ENCODE measurements at regions of chr17 and their contacts with region 1.

Region 1: GRCh38 chr17:64938925-64939474 is 19.7 kb upstream of the LRRC37A3 start:
- DNase-seq: peak in 1 of 2 donors; percentile 30
- H3K4me3 ChIP-seq: no peak overlapping the region
- H3K27ac ChIP-seq: no peak overlapping the region
- H3K4me1 ChIP-seq: no peaks in the 10 kb centered on the region
- H3K27me3 ChIP-seq: no peaks in the 10 kb centered on the region
- CTCF ChIP-seq: peak; percentile 33 to 36

Region 2: GRCh38 chr17:64968652-64969501 is 29.9 kb after region 1 on chr17:
- intact Hi-C with region 1: no loop called
- DNase-seq: no peak
- H3K4me3 ChIP-seq: no peak overlapping the region
- H3K27ac ChIP-seq: no peak overlapping the region
- H3K4me1 ChIP-seq: peaks cover 0 to 15% (median 2%) of the 10 kb centered on the region in 4 donors
- H3K27me3 ChIP-seq: no peaks in the 10 kb centered on the region
- CTCF ChIP-seq: no peak

Region 3: DNA sequence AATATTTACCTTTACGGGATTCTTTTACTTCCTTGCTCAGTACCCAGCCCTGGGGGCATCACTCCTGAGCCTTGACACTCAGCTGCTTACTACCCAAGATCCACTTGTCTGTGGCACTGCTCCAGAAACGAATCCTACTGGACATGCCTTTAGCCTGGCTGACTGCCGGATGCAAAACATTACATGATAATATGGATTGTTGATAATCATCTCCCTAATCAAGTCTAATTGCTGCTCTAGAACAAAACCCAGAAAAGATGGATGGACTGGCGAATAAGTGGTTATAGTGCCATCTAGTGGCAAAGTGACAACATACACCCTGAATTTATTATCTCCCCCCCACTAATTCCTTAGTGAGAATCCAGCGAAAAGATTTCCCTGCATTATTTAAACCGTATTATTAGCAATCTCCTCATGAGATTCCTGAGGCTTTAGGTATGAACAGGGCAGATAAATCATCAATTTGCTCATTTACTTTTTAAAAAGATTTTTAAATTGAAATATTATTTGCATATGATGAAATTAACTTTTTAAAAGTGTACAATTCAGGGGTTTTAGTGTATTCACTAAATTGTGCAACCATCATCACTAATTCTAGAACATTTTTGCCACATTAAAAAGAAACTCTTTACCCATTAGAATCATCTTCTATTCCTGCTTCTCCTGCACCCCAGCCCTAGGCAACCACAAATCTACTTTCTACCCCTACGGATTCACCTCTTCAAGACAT is 259.8 kb after region 1 on chr17:
- intact Hi-C with region 1: loop called (anchors 10 kb)
- DNase-seq: no peak
- H3K4me3 ChIP-seq: no peak overlapping the region
- H3K27ac ChIP-seq: no peak overlapping the region
- H3K4me1 ChIP-seq: no peaks in the 10 kb centered on the region
- H3K27me3 ChIP-seq: no peaks in the 10 kb centered on the region
- CTCF ChIP-seq: peak; percentile 67 to 73

Region 4: DNA sequence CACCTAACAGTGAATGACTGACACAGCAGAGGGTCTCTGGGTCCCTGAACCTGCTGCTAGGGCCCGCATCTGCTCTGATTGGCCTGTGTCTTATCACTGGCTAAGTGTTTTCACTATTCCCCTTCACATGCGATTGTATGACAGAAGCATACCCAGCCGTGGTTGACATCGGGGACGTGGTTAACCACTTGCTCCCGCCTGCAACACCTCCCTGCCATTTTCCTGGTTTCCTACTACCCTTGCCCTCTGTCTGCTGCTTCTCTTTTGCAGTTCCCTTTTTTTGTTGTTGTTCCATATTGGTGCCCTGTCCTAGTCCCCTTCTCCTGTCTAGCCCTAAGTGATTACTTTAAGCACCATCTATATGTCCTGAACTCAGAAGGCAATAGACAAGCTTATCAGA is 375.2 kb after region 1 on chr17:
- intact Hi-C with region 1: no loop called
- DNase-seq: no peak
- H3K4me3 ChIP-seq: no peak overlapping the region
- H3K27ac ChIP-seq: no peak overlapping the region
- H3K4me1 ChIP-seq: no peaks in the 10 kb centered on the region
- H3K27me3 ChIP-seq: peaks cover 0 to 10% of the 10 kb centered on the region in 2 donors
- CTCF ChIP-seq: no peak

Measured in tibial artery (tissue), 4 donors.